Activated B cell treated with CpG ODN at 0.5 μM for 24 hours (primary cell): ENCODE measurements at regions of chr7 and their contacts with region 1.

Region 1: DNA sequence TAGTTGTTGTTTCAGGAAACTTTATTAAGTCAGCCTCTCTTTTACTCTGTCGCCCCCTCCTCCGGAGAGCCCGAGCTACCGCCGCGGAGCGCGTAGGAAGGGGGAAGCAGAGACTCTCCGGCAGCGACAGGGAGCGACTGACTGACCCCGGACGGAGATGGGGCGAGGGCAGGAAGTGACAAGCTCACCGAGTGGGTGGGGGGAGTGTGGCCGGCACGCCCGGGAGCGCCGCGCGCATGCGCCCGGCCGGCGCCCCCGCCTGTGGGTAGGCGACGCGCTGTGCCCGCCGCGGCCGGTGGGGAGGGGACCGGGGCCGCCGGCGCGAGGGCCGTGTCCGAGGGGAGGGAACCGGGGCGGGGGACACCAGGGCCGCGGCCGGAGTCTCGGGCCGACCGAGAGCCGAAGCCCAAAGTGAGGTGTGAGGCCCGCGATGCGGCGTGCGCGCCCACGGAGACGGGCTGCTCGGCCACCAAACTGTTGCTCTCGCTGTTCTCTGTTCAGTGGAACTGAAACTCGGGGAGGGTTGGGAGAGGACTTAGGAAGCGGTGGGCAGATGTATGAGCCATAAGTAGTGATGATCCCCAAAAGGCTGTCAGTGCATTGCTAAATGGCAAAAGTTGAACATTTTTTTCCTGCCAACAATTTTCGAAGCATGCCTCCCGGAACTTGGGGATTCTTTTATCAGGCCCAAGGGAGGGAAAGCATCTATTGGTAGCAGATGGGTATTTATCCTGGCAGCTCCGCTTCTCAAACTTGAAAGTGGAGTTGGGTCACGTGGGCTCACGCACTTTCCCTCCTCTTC is at the start of gene ZNF800:
- DNase-seq: peak; percentile 89
- ATAC-seq: peak; percentile 85
- H3K4me3 Mint-ChIP-seq: peak within 1 kb of the TSS; percentile 96
- H3K27ac Mint-ChIP-seq: peak within 1 kb of the TSS; percentile 98
- H3K4me1 Mint-ChIP-seq: peaks cover 60% of the 10 kb centered on the region
- H3K27me3 Mint-ChIP-seq: no peaks in the 10 kb centered on the region
- CTCF ChIP-seq: no peak
- total RNA-seq, gene ZNF800: 40.5 and 53.5 TPM in 2 replicates

Region 2: GRCh38 chr7:127189886-127190285 is 202.9 kb before region 1 on chr7:
- CTCF ChIA-PET with region 1: no interaction called
- POLR2A ChIA-PET with region 1: no interaction called
- intact Hi-C with region 1: no loop called
- DNase-seq: no peak
- ATAC-seq: no peak
- H3K4me3 Mint-ChIP-seq: no peak overlapping the region
- H3K27ac Mint-ChIP-seq: no peak overlapping the region
- H3K4me1 Mint-ChIP-seq: no peaks in the 10 kb centered on the region
- H3K27me3 Mint-ChIP-seq: no peaks in the 10 kb centered on the region
- CTCF ChIP-seq: no peak

Region 3: DNA sequence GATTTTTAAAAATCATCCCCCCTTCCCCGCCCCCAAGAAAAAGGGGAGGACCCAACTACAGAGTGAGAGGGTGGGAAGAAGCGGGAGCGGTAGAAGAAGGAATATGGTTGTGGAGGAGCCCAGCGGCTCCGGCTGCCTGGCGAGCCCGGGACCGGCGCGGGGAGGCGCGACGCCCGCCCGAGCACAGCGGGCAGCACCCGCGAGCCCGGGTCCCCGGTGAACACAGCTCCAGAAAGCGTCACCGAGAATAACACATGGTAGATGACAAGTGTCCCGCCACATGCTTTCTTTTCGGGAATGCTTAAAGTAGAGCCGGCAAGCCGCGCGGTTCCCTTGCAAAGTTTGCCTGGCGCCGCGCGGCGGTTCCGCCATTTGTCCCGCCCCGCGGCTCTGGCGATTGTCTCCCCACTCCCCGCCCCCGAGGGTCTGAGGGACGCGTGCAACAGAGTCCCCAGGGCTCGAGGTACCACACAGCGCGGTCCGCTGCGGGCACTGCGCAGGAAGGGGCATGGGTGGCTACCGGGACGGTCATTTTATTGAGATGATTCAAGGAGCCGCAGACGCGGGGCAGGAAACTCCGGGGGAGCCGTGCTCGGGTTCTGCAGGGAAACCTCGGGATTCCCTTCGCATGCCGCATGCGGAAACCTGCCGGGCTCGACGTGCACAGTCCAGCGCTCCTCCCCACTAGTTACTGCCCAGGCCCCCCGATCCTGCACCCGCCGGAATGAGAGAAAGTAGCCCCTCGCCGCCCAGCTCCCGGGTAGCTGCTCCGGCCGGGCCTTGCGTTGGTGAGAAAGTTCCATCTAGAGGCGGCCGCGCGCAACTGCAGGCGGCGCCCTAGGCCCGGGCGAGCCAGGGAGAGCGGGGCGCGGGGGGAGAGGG is 139.2 kb before region 1 on chr7:
- CTCF ChIA-PET with region 1: no interaction called
- POLR2A ChIA-PET with region 1: interaction called, 3 read pairs
- intact Hi-C with region 1: loop called (anchors 5 kb)
- DNase-seq: peak; percentile 58
- ATAC-seq: peak; percentile 88
- H3K4me3 Mint-ChIP-seq: peak overlapping the region; percentile 88
- H3K27ac Mint-ChIP-seq: no peak overlapping the region
- H3K4me1 Mint-ChIP-seq: peaks cover 25% of the 10 kb centered on the region
- H3K27me3 Mint-ChIP-seq: peaks cover 67% of the 10 kb centered on the region
- CTCF ChIP-seq: peak; percentile 54

Region 4: GRCh38 chr7:127365164-127365956 is 27.4 kb before region 1 on chr7:
- CTCF ChIA-PET with region 1: interaction called, 3 read pairs
- POLR2A ChIA-PET with region 1: interaction called, 10 read pairs
- intact Hi-C with region 1: no loop called
- DNase-seq: no peak
- ATAC-seq: no peak
- H3K4me3 Mint-ChIP-seq: no peak overlapping the region
- H3K27ac Mint-ChIP-seq: no peak overlapping the region
- H3K4me1 Mint-ChIP-seq: no peaks in the 10 kb centered on the region
- H3K27me3 Mint-ChIP-seq: no peaks in the 10 kb centered on the region
- CTCF ChIP-seq: no peak

Region 5: GRCh38 chr7:127413962-127414361 is 21.2 kb after region 1 on chr7:
- CTCF ChIA-PET with region 1: interaction called, 5 read pairs
- POLR2A ChIA-PET with region 1: interaction called, 33 read pairs
- intact Hi-C with region 1: loop called (anchors 1 kb)
- DNase-seq: no peak
- ATAC-seq: peak; percentile 67
- H3K4me3 Mint-ChIP-seq: peak overlapping the region; percentile 16
- H3K27ac Mint-ChIP-seq: peak overlapping the region; percentile 76
- H3K4me1 Mint-ChIP-seq: peaks cover 75% of the 10 kb centered on the region
- H3K27me3 Mint-ChIP-seq: no peaks in the 10 kb centered on the region
- CTCF ChIP-seq: no peak

Region 6: GRCh38 chr7:127585044-127585953 is 192.5 kb after region 1 on chr7 and contains the start of gene GCC1:
- CTCF ChIA-PET with region 1: no interaction called
- POLR2A ChIA-PET with region 1: interaction called, 12 read pairs
- intact Hi-C with region 1: loop called (anchors 1 kb)
- DNase-seq: peak; percentile 98
- ATAC-seq: peak; percentile 78
- H3K4me3 Mint-ChIP-seq: peak within 1 kb of the TSS; percentile 89
- H3K27ac Mint-ChIP-seq: peak within 1 kb of the TSS; percentile 79
- H3K4me1 Mint-ChIP-seq: peaks cover 76% of the 10 kb centered on the region
- H3K27me3 Mint-ChIP-seq: no peaks in the 10 kb centered on the region
- CTCF ChIP-seq: no peak
- total RNA-seq, gene GCC1: 22.5 and 23.3 TPM in 2 replicates

Region 7: DNA sequence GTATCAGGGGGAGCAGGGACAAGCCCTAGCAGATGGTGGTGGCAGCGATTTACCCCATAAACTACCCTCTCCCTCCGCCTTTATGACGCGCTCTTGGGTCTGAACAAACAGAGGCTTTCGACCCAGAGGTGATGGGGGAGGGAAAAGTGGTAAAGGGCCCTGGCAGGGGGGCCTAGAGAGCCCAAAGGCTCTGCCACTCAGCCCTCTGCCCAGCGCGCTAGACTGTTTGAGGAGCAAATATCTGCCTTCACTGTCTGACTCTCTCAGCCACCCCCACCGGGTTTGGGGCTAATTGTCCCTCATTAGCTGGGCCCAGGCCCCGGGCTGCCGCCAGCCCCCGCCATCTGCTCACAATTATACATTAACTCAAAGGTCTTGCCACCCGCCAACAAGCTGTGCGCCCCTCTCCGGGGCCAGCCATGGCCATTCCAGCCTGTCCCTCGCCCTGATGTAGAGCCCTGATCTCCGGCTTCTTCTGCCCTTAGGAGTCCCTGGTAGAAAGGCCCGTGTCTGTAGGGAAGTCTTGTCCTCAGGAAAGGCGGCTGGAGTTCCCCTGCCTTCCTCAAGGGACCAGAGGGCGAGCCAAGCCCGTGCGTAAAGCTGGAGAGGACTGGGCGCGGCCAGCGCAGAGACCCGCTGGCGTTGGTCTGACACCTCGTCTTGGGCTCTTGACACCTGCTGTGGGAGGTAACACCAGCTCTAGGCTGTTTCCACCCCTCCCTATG is 227.1 kb after region 1 on chr7:
- CTCF ChIA-PET with region 1: no interaction called
- POLR2A ChIA-PET with region 1: no interaction called
- intact Hi-C with region 1: no loop called
- DNase-seq: no peak
- ATAC-seq: no peak
- H3K4me3 Mint-ChIP-seq: no peak overlapping the region
- H3K27ac Mint-ChIP-seq: no peak overlapping the region
- H3K4me1 Mint-ChIP-seq: peaks cover 2% of the 10 kb centered on the region
- H3K27me3 Mint-ChIP-seq: peaks cover 46% of the 10 kb centered on the region
- CTCF ChIP-seq: no peak

Region 8: GRCh38 chr7:128343554-128344430 is 951.0 kb after region 1 on chr7 and contains the start of gene RBM28:
- CTCF ChIA-PET with region 1: no interaction called
- POLR2A ChIA-PET with region 1: interaction called, 4 read pairs
- intact Hi-C with region 1: loop called (anchors 1 kb)
- DNase-seq: peak; percentile 80
- ATAC-seq: peak; percentile 95
- H3K4me3 Mint-ChIP-seq: peak within 1 kb of the TSS; percentile 97
- H3K27ac Mint-ChIP-seq: peak within 1 kb of the TSS; percentile 95
- H3K4me1 Mint-ChIP-seq: peaks cover 26% of the 10 kb centered on the region
- H3K27me3 Mint-ChIP-seq: no peaks in the 10 kb centered on the region
- CTCF ChIP-seq: no peak
- total RNA-seq, gene RBM28: 45.7 and 54.4 TPM in 2 replicates